ENCODE measurements at regions of chr13 and their contacts with region 1.

Region 1: DNA sequence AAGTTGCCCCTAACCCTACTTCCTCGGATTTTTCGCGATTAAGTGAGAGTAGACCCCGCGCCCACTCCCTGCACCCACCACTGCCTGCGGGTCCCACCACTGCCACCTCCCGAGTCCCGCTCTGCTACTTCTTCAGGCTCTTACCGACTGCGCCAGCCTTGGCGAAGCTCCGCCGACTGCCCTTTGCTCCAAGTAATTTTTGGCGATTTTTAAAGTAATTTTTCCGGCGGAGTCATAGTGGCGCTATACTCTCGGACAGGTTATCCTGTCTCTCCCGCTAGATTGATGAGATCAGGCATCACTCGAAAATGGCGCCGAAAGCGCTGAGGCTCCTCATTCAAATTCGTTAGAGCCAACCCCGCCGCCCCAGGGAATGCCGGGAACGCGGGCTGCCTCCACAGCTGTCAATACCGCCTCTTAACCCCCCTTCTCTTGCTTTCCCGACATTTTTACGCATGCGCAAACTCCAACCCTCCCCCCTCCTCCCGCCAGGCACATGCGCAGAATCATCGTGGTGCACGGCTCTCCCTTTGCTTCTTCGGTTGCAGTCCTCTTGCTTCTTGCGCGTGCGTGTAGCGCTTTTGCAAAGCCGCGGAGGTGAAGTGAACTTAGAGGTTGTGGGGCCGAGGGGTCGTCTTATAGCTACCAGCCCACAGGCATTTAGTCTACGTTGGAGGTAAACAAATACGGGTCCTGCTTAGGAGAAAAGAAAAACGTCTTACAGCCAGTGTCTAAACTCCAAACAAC is 66.6 kb downstream of the KCNRG start:
- DNase-seq: peak; percentile 99
- ATAC-seq: peak; percentile 77
- H3K4me3 ChIP-seq: peak overlapping the region; percentile 81 to 99 (median 91)
- H3K4me3 Mint-ChIP-seq: peak overlapping the region; percentile 94
- H3K27ac ChIP-seq: peak overlapping the region; percentile 82 to 85
- H3K27ac Mint-ChIP-seq: peak overlapping the region; percentile 94
- H3K4me1 ChIP-seq: peaks cover 29 to 48% of the 10 kb centered on the region in 2 donors
- H3K4me1 Mint-ChIP-seq: peaks cover 57% of the 10 kb centered on the region
- H3K27me3 ChIP-seq: no peaks in the 10 kb centered on the region
- H3K27me3 Mint-ChIP-seq: no peaks in the 10 kb centered on the region
- CTCF ChIP-seq: no peak

Region 2: DNA sequence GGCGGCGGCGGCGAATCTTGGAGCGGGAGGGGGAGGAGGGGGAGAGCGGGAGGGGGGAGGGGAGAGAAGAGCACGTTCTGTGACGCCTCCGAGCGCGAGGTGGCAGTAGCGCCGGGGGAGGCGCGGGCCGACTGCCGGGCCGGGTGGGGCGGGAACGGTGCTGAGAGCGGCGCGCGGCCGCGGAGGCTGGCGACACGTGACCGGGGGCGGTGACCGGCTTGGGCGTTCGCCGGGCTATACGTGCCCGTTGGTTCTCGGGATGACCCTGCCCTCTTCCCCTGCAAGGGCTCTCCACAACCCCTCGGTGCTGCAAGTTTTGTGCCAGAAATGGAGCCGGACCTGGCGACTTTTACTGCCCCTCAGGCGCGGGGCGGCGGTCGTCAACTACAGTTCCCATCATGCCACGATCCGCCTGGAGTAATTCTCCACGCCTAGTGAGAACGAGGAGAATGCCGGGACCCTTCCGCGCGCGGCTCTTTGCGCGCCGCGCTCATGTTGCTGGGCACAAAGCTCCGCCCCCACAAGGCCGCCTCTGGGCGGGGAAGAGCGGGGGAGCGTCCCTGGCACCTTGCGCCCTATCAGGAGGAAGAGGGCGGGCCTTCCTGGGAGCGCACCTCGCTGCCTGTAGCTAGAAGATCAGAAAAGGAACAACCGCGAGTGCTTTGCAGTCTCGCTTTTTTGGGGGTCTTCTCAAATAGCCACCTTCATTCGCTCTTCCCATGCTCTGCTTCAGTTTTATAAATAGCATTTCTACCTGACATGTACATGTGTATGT is 289.1 kb before region 1 on chr13 and contains the start of gene KPNA3:
- CTCF ChIA-PET with region 1: interaction called, 3 read pairs
- POLR2A ChIA-PET with region 1: no interaction called
- intact Hi-C with region 1: loop called (anchors 2 kb)
- DNase-seq: peak; percentile 97
- ATAC-seq: peak; percentile 87
- H3K4me3 ChIP-seq: peak within 1 kb of the TSS; percentile 79 to 88 (median 80)
- H3K4me3 Mint-ChIP-seq: peak within 1 kb of the TSS; percentile 97
- H3K27ac ChIP-seq: peak within 1 kb of the TSS; percentile 85 to 91
- H3K27ac Mint-ChIP-seq: peak within 1 kb of the TSS; percentile 99
- H3K4me1 ChIP-seq: peaks cover 20 to 21% of the 10 kb centered on the region in 2 donors
- H3K4me1 Mint-ChIP-seq: peaks cover 34% of the 10 kb centered on the region
- H3K27me3 ChIP-seq: no peaks in the 10 kb centered on the region
- H3K27me3 Mint-ChIP-seq: peaks cover 4% of the 10 kb centered on the region
- CTCF ChIP-seq: no peak
- total RNA-seq, gene KPNA3: 19.0 and 19.7 TPM in 2 replicates

Region 3: DNA sequence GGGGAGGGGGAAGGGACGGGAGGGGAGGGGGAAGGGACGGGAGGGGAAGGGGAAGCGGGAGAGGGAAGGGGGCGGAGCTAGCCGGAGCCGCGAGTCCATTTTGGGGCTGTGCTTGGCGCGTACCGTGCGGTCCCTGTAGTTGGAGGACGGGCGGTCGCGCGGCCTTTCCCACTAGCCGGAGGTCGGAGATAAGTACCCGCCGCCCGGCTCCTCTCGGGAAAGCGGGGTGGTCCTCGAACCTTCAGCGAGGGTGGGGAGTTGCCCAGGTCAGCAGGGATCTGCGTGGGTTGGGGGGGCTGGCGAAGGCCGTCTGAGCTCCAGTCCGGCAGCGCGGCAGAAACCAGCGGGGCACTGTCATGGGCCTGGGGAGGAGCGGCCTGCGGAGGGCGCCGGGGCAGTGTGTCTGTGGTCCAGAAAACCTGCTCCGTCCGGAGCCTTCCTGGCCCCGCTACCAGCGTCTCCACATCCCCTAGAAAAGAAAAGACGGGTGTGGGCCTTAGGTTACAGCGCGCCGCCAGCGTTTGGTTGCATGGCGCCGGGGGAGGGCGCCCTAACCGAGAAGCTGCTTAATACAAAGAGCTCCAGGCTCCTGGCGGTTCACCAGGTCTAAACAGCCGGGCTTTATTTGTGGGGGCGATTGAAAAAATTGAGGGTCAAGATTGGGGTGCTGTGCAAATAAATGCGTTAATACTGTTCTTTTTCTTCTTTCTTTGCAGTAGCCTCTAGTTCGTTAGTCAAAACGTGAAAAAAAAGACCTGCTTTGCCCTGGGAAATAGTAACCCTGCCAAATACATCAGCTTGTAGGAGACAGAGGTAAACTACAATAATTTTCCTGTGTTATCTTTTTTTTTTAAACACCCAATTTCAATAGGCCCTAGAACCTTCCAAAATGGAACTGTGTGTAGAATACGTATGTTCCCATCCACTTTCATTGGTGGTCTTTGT is 84.6 kb before region 1 on chr13 and contains the start of gene TRIM13:
- CTCF ChIA-PET with region 1: interaction called, 89 read pairs
- POLR2A ChIA-PET with region 1: interaction called, 60 read pairs
- intact Hi-C with region 1: loop called (anchors 1 kb)
- DNase-seq: peak; percentile 93
- ATAC-seq: peak; percentile 74
- H3K4me3 ChIP-seq: peak within 1 kb of the TSS; percentile 78 to 96 (median 94)
- H3K4me3 Mint-ChIP-seq: peak within 1 kb of the TSS; percentile 90
- H3K27ac ChIP-seq: peak within 1 kb of the TSS; percentile 93
- H3K27ac Mint-ChIP-seq: peak within 1 kb of the TSS; percentile 96
- H3K4me1 ChIP-seq: peaks cover 30 to 42% of the 10 kb centered on the region in 2 donors
- H3K4me1 Mint-ChIP-seq: peaks cover 49% of the 10 kb centered on the region
- H3K27me3 ChIP-seq: no peaks in the 10 kb centered on the region
- H3K27me3 Mint-ChIP-seq: no peaks in the 10 kb centered on the region
- CTCF ChIP-seq: peak; percentile 89
- total RNA-seq, gene TRIM13: 45.9 and 52.8 TPM in 2 replicates

Region 4: DNA sequence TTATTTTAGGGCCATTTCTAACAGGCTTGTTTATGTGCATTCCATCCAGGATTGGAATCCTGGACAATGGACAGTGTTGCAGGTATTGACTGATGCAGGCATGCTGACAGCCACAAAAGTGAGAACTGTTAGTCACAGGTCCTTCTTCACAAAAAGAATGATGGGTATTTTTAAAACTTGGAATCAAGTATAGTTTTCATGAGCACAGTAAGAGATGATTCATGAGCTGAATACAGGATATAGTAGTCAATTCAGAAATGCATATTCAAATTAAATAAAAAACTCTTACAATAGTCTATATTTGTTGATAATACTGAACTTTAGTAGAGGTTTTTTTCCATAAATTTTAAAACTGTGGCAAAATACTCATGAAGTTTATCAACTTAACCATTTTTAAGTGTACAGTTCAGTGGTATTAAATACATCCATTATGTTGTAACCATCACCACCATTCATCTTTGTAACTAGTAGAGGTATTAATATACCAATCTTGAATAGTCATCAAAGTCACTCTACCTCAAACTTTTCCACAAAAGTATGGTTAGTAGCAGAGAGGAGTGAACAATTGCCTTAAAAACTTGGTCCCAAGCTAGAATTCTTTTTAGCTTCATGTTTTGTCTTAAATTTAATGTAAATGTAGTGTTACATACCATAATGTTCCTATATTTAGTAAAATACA is 12.9 kb after region 1 on chr13:
- CTCF ChIA-PET with region 1: interaction called, 24 read pairs
- POLR2A ChIA-PET with region 1: interaction called, 5 read pairs
- intact Hi-C with region 1: no loop called
- DNase-seq: no peak
- ATAC-seq: no peak
- H3K4me3 ChIP-seq: no peak overlapping the region
- H3K4me3 Mint-ChIP-seq: no peak overlapping the region
- H3K27ac ChIP-seq: no peak overlapping the region
- H3K27ac Mint-ChIP-seq: no peak overlapping the region
- H3K4me1 ChIP-seq: peaks cover 21 to 31% of the 10 kb centered on the region in 2 donors
- H3K4me1 Mint-ChIP-seq: peaks cover 23% of the 10 kb centered on the region
- H3K27me3 ChIP-seq: no peaks in the 10 kb centered on the region
- H3K27me3 Mint-ChIP-seq: no peaks in the 10 kb centered on the region
- CTCF ChIP-seq: no peak

Region 5: DNA sequence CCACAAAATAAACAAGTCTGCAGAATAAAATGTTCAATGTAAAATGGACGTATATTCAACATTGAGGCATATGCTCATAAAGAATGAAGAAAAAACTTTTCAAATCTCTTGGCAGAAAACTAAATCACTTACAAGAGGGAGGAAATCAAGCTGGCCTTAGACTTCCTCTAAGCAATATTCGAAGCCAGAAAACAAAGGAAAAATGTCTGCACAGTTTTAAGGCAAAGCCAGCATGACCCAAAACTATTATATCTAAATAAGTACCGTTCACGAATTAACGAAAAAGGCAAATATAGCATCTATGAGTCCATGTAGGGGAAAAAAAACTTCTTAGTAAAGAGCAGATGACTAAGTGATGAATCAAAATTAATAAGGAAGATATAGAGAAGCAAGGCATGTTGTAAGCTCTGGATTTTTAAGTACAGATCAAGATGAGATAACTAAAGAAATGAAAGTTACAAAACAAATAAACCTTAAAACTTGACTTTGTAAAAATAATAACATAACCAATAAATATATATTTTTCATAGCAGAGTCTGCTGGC is 34.6 kb after region 1 on chr13:
- CTCF ChIA-PET with region 1: interaction called, 31 read pairs
- POLR2A ChIA-PET with region 1: no interaction called
- intact Hi-C with region 1: no loop called
- DNase-seq: no peak
- ATAC-seq: no peak
- H3K4me3 ChIP-seq: no peak overlapping the region
- H3K4me3 Mint-ChIP-seq: no peak overlapping the region
- H3K27ac ChIP-seq: peak overlapping the region in 1 of 2 donors; percentile 51
- H3K27ac Mint-ChIP-seq: peak overlapping the region; percentile 8
- H3K4me1 ChIP-seq: peaks cover 11 to 16% of the 10 kb centered on the region in 2 donors
- H3K4me1 Mint-ChIP-seq: peaks cover 33% of the 10 kb centered on the region
- H3K27me3 ChIP-seq: no peaks in the 10 kb centered on the region
- H3K27me3 Mint-ChIP-seq: no peaks in the 10 kb centered on the region
- CTCF ChIP-seq: no peak

Region 6: DNA sequence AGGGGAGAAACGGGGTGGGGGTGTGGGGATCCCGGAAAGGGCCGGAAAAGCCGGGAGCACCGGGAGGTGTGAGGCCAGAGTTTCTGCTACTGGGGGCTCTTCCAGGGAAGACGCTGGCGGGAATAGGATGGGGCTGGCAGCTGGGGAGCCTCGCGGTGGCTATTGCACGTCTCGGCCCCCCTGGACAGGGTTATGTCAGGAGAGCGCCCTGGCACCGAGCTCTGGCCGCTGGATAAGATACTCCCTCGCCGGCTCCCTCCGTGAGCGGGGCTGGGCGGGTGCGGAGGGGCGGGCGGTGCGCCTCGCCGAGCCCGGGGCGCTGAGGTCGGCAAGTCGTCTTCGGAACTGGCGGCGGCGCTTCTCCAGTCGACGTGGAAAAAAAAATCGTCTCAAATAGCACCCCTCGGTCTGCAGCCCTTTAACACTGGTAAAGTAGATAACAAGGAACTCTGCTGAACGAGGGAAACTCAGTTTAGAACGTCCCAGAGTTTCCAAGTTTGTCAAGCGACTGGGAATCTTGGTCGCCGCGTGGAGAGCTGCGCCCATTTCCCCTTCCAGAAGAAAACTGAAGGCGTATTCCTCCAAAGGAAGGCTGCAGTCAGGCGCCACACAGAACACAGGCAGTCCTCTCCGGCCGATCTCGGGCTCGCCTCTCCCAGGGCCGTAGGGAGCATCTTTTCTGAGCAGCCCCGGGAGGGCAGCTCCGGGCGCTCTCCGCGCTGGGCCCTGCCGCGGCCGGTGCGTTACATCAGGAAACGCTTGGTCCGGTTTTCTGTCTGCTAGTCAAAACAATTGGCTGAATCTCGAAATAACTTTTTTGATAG is 48.5 kb after region 1 on chr13:
- CTCF ChIA-PET with region 1: interaction called, 195 read pairs
- POLR2A ChIA-PET with region 1: interaction called, 142 read pairs
- intact Hi-C with region 1: loop called (anchors 1 kb)
- DNase-seq: peak; percentile 71
- ATAC-seq: no peak
- H3K4me3 ChIP-seq: peak overlapping the region; percentile 43 to 87 (median 61)
- H3K4me3 Mint-ChIP-seq: peak overlapping the region; percentile 92
- H3K27ac ChIP-seq: no peak overlapping the region
- H3K27ac Mint-ChIP-seq: peak overlapping the region; percentile 86
- H3K4me1 ChIP-seq: peaks cover 72 to 73% of the 10 kb centered on the region in 2 donors
- H3K4me1 Mint-ChIP-seq: peaks cover 63% of the 10 kb centered on the region
- H3K27me3 ChIP-seq: peaks cover 2 to 68% (median 47%) of the 10 kb centered on the region in 4 experiments
- H3K27me3 Mint-ChIP-seq: peaks cover 35% of the 10 kb centered on the region
- CTCF ChIP-seq: no peak

Region 7: DNA sequence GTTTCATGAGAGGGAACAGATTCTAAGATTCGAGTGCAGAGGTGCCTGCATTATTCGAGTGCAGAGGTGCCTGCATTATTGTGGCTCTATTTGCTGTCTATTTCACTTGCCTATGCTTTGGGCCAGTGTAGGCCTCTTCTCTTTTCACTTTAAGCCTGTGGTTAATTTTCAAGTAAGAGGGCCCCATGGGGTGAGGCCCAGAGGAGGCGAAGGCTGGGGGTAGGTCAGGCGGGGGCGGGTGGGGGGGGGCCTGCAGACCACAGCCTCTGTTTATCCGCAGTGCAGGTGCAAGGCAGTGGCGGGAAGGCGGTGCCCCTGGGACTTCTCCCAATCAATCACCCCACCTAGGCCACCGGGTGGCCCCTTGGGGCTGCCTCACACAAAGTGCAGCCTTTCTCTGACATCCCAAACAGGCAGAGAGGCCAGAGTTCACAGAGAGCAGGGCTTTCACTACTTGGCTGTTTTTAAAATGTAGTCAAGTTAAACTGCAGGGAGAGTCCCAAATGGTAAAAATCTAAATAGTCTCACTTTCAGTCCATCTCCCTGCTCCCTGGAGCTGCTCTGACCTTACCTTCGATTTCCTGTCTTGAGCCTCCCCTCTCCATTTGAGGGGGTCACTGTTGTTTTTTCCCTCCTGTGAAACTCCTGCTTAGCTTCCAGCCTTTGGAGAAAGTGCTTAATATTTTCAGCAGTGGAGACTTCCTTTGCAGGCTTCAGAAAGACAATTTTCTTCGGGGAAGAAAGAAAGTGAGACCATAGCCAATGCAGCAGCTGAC is 512.6 kb after region 1 on chr13:
- CTCF ChIA-PET with region 1: interaction called, 7 read pairs
- POLR2A ChIA-PET with region 1: interaction called, 4 read pairs
- intact Hi-C with region 1: loop called (anchors 5 kb)
- DNase-seq: peak; percentile 83
- ATAC-seq: peak; percentile 89
- H3K4me3 ChIP-seq: peak overlapping the region in 2 of 5 experiments; percentile 10 to 35
- H3K4me3 Mint-ChIP-seq: peak overlapping the region; percentile 75
- H3K27ac ChIP-seq: peak overlapping the region; percentile 79 to 87
- H3K27ac Mint-ChIP-seq: peak overlapping the region; percentile 93
- H3K4me1 ChIP-seq: peaks cover 95 to 99% of the 10 kb centered on the region in 2 donors
- H3K4me1 Mint-ChIP-seq: peaks cover 85% of the 10 kb centered on the region
- H3K27me3 ChIP-seq: no peaks in the 10 kb centered on the region
- H3K27me3 Mint-ChIP-seq: no peaks in the 10 kb centered on the region
- CTCF ChIP-seq: no peak